ENCODE measurements at regions of chr17 and their contacts with region 1.

Region 1: DNA sequence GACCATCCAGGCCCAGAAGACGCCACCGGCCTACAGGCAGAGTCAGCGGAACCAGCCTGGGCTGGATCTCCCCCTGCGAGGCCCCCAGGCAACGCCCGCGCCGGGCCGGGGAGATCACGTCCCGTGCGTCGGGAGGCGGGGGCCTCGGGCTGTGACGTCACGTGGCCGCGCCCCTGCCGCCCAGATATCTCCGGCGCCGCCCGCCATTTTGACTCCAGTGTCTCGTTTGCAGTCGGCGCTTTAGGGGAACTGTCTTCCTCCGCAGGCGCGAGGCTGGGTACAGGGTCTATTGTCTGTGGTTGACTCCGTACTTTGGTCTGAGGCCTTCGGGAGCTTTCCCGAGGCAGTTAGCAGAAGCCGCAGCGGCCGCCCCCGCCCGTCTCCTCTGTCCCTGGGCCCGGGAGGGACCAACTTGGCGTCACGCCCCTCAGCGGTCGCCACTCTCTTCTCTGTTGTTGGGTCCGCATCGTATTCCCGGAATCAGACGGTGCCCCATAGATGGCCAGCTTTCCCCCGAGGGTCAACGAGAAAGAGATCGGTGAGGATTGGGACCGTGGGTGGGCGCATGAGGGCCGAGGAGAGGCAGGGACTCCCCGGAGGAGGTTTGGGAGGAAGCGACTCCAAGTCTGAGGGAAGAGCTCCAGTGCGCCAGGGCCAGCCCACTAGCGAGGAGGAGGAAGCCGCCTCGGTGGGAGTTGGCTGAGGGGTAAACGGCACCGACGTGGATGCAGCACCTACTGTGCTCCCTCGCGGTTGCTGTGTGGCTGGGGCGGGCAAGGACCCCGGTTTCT is at the start of gene WSB1:
- DNase-seq: peak; percentile 93 to 98 (median 96)
- ATAC-seq: peak; percentile 89
- H3K4me3 ChIP-seq: peak within 1 kb of the TSS; percentile 73 to 95
- H3K27ac ChIP-seq: peak within 1 kb of the TSS; percentile 100
- H3K4me1 ChIP-seq: peaks cover 20 to 37% of the 10 kb centered on the region in 2 donors
- H3K27me3 ChIP-seq: no peaks in the 10 kb centered on the region
- CTCF ChIP-seq: peak in 1 of 2 donors; percentile 6
- polyA plus RNA-seq, gene WSB1: 382 to 536 (median 455) TPM

Region 2: DNA sequence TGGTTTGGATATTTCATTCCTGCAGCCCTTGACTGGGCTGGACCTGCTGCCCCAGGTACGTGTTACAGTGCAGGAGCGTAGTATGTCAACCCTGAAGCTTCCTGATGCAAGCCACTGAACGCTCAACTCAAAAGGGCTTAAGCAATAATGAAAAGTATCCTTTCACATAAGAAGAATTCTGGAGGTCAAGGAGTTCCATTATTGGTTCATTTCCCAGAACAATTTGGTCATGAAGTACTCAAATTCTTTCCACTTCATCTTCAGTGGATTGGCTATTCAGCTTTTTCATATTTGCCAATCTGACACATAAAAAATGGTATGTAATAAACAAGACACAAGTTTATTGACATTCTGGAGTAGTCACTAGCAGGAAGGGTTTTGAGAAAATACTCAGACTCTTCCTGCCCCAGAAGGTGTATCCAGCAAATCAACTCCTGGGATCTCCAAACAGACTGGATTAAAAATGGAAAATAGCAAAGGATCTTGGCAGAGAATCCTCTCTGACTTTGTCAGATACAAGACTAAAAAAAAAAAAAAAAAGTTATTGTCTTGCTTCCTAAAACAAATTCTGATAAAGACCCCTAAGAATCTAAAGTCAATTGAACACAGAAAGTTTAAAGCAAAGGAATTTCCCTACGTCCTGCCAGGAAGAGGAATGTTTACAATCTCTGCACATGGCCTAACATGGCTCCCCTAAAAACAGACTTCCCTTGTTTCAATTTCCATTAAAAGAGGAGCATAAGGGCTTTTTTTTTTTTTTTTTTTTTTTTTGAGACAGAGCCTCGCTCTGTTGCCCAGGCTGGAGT is 37.7 kb before region 1 on chr17:
- intact Hi-C with region 1: loop called in 1 of 2 experiments (anchors 2 kb)
- DNase-seq: no peak
- ATAC-seq: peak; percentile 94
- H3K4me3 ChIP-seq: no peak overlapping the region
- H3K27ac ChIP-seq: peak overlapping the region; percentile 66 to 85
- H3K4me1 ChIP-seq: peaks cover 8 to 20% of the 10 kb centered on the region in 2 donors
- H3K27me3 ChIP-seq: no peaks in the 10 kb centered on the region
- CTCF ChIP-seq: no peak

Region 3: DNA sequence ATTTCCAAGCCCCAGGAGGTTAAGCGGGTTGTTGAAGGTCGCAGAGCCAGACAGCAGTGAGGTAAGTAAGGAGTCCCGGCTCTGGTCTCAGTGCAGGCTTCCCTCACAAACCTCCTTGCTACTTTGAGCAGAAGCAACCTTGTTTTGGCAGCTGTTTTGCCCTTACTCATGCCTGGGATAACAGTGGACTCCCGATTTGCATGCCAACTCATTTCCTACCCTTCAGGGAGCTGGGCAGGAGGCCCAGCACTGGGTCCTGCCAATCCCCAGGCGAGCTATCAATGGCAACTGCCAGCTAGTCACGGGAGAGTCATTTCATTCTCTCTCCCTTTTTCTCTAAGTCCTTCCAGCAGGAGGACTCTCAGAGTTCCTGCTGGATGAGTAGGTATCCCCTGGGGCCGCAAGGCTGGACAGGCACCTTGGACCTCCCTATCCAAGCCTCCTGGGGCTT is 90.2 kb after region 1 on chr17:
- intact Hi-C with region 1: no loop called
- DNase-seq: no peak
- ATAC-seq: peak; percentile 46
- H3K4me3 ChIP-seq: no peak overlapping the region
- H3K27ac ChIP-seq: no peak overlapping the region
- H3K4me1 ChIP-seq: peaks cover 6 to 13% of the 10 kb centered on the region in 2 donors
- H3K27me3 ChIP-seq: no peaks in the 10 kb centered on the region
- CTCF ChIP-seq: no peak

Measured in left lung (tissue), 14 donors.